ENCODE measurements at regions of chr16 and their contacts with region 1.

Region 1: DNA sequence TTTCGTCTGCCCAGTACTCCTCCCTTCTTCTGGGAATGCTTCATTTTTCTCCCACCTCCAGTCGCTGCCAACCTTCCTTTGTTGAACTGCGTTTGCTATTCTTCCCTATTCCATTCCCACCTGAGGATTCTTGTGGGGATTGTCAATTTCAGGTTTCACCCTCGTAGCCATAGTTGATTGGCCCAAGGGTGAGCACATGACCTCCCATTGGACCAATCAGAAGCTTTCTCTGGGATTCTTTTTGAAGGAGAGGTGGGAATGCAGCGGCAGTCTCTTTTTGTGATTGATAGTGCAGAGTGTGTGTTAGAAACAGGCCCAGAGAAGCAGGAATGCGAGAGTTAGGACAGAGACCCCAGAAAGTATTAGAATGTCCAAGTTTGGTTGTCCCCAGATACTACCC is 49.1 kb upstream of the GPRC5B start:
- DNase-seq: peak in 3 of 4 experiments; percentile 58 to 64 (median 60)
- ATAC-seq: no peak
- H3K4me3 ChIP-seq: no peak overlapping the region
- H3K27ac ChIP-seq: no peak overlapping the region
- H3K4me1 ChIP-seq: no peaks in the 10 kb centered on the region
- H3K27me3 ChIP-seq: peaks cover 5 to 13% of the 10 kb centered on the region in 2 experiments; a peak in 3 of 5 replicates
- CTCF ChIP-seq: no peak
- EP300 ChIP-seq: no peak
- POLR2A ChIP-seq: no peak
- RAD21 ChIP-seq: no peak

Region 2: DNA sequence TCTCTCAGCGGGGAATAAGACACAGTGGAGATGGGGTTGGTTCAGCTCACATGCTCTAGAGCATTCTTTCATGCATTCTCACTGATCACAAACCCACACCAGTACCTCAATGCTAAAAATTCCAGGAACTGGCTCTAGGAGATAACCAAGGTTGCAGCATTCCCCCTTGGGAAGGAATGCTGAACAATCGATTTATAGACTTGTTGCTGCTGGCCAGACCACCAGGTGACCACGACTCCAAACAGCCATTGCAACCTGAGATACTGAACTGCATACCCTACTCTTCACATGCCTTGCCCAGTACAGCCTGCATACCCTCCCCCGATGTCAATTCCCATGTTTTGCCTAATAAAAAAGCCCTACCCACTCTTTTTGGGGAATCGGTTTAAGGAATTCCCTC is 26.0 kb after region 1 on chr16:
- CTCF ChIA-PET with region 1: no interaction called
- POLR2A ChIA-PET with region 1: interaction called, 3 read pairs
- in situ Hi-C with region 1: no loop called
- intact Hi-C with region 1: loop called (anchors 2 kb)
- DNase-seq: no peak
- ATAC-seq: no peak
- H3K4me3 ChIP-seq: no peak overlapping the region
- H3K27ac ChIP-seq: no peak overlapping the region
- H3K4me1 ChIP-seq: no peaks in the 10 kb centered on the region
- H3K27me3 ChIP-seq: peaks cover 0 to 16% of the 10 kb centered on the region in 2 experiments; a peak in 3 of 5 replicates
- CTCF ChIP-seq: no peak
- EP300 ChIP-seq: no peak
- POLR2A ChIP-seq: no peak
- RAD21 ChIP-seq: no peak

Region 3: DNA sequence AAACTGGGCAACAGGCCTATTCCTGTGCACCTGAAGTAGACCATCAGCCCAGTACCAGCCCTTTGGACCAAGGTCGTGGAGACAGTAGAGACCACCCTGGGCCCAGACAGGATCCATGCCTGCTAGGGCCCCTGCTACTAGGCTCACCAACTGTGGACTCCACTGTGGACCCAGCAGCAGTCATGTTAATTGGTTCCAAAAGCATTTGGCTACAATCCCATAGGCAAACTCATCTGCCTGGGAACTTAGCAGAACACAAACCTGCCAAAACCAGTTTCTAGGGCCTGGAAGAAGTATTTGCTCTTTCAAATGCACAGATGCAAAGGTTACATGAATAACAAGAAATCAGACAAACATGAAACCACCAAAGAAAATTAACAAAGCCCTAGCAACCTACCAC is 570.7 kb after region 1 on chr16:
- CTCF ChIA-PET with region 1: no interaction called
- POLR2A ChIA-PET with region 1: no interaction called
- in situ Hi-C with region 1: no loop called
- intact Hi-C with region 1: no loop called
- DNase-seq: no peak
- ATAC-seq: no peak
- H3K4me3 ChIP-seq: no peak overlapping the region
- H3K27ac ChIP-seq: no peak overlapping the region
- H3K4me1 ChIP-seq: no peaks in the 10 kb centered on the region
- H3K27me3 ChIP-seq: no peaks in the 10 kb centered on the region
- CTCF ChIP-seq: no peak
- EP300 ChIP-seq: no peak
- POLR2A ChIP-seq: no peak
- RAD21 ChIP-seq: no peak

Measured in K562 (cell line).